CD4-positive, alpha-beta memory T cell (primary cell): ENCODE measurements at regions of chr10 and their contacts with region 1.

Region 1: DNA sequence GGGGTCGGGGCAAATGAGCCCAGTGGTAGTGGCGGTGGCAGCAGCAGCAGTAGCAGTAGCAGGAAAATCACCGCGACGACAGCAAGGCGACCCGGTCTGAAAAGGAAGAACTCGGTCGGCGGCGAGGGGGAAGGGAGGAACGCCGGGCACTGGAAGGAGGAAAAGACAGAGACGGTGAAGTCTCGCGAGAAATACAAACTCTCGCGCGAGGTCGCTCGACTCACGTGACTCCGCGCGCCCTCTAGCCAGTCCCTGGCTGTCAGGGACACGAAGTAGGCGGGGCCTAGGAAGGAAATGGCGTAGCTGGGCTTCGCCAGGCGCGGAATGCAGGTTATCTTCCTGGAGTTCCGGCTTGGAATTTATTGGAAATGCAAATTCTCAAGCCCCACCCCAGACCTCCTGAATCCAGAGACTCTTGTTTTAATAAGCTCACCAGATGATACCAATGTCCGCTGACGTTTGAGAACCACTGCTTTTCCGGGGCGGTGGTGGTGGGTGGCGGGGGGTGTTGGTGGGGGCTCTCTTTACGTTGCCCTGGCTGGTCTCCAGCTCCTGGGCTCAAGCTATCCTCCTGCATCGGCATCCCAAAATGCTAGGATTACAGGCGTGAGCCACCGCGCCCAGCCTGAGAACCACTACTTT is at the start of gene SMNDC1:
- DNase-seq: peak; percentile 96 to 97 (median 96)
- H3K4me3 ChIP-seq: peak within 1 kb of the TSS; percentile 62 to 70
- H3K4me3 Mint-ChIP-seq: peak within 1 kb of the TSS; percentile 96 to 98 (median 98)
- H3K27ac ChIP-seq: peak within 1 kb of the TSS; percentile 81
- H3K27ac Mint-ChIP-seq: peak within 1 kb of the TSS; percentile 95 to 100 (median 99)
- H3K4me1 ChIP-seq: peaks cover 52% of the 10 kb centered on the region
- H3K4me1 Mint-ChIP-seq: peaks cover 27 to 58% (median 45%) of the 10 kb centered on the region in 4 donors
- H3K27me3 ChIP-seq: no peaks in the 10 kb centered on the region
- H3K27me3 Mint-ChIP-seq: no peaks in the 10 kb centered on the region
- total RNA-seq, gene SMNDC1: 39.0 to 39.3 TPM

Region 2: GRCh38 chr10:110225756-110226542 is 79.0 kb before region 1 on chr10:
- CTCF ChIA-PET with region 1: no interaction called
- POLR2A ChIA-PET with region 1: interaction called, 3 read pairs
- intact Hi-C with region 1: loop called (anchors 1 kb)
- DNase-seq: peak; percentile 88 to 90 (median 89)
- H3K4me3 ChIP-seq: peak overlapping the region; percentile 39 to 82
- H3K4me3 Mint-ChIP-seq: peak overlapping the region; percentile 92 to 96 (median 94)
- H3K27ac ChIP-seq: peak overlapping the region; percentile 67
- H3K27ac Mint-ChIP-seq: peak overlapping the region; percentile 91 to 96 (median 96)
- H3K4me1 ChIP-seq: peaks cover 29% of the 10 kb centered on the region
- H3K4me1 Mint-ChIP-seq: peaks cover 27 to 62% (median 42%) of the 10 kb centered on the region in 4 donors
- H3K27me3 ChIP-seq: no peaks in the 10 kb centered on the region
- H3K27me3 Mint-ChIP-seq: no peaks in the 10 kb centered on the region

Region 3: DNA sequence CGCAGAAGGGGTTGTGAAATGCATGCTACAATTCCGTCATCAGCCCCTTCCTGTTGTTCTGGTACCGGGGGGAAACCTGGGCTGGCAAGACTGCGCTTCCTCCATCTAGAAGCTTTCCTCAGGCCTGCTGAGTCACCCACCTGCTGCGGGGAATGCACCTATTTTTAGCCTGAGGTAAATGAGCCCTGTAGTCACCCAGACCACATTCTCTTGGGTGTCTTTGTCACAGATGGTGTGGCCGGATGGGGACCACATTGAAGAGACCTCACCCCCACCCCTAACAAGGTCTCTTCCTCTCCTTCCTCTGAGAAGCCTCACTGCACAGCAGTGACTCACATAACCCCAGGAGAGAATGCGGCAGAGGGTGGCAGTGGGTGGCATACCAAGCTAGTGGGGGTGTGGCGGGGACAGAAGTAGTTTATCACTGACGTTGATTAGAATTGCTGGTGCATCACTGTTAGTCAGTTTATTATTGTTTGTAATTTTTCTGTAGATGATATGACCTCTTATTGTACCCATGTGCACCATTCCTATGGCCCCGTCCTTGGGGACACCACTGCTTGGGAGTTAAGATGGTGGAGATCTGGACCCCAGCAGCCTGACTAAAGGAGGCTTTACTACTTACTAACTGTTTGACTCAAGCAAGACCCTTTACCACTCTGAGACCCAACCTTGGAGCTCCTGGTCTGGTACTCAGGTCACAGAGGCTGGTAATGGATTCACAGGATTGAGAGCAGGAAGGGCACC is 109.8 kb after region 1 on chr10:
- CTCF ChIA-PET with region 1: interaction called, 3 read pairs
- POLR2A ChIA-PET with region 1: interaction called, 14 read pairs
- intact Hi-C with region 1: loop called (anchors 2 kb)
- DNase-seq: peak; percentile 88 to 99 (median 94)
- H3K4me3 ChIP-seq: peak overlapping the region in 1 of 2 donors; percentile 5
- H3K4me3 Mint-ChIP-seq: peak overlapping the region; percentile 22 to 71 (median 62)
- H3K27ac ChIP-seq: peak overlapping the region; percentile 62
- H3K27ac Mint-ChIP-seq: peak overlapping the region; percentile 89 to 98 (median 93)
- H3K4me1 ChIP-seq: peaks cover 43% of the 10 kb centered on the region
- H3K4me1 Mint-ChIP-seq: peaks cover 25 to 60% (median 33%) of the 10 kb centered on the region in 4 donors
- H3K27me3 ChIP-seq: no peaks in the 10 kb centered on the region
- H3K27me3 Mint-ChIP-seq: no peaks in the 10 kb centered on the region

Region 4: GRCh38 chr10:110547139-110547761 is 242.3 kb after region 1 on chr10:
- CTCF ChIA-PET with region 1: interaction called, 79 read pairs
- POLR2A ChIA-PET with region 1: interaction called, 16 read pairs
- intact Hi-C with region 1: loop called (anchors 1 kb)
- DNase-seq: peak in 4 of 5 donors; percentile 67 to 74 (median 70)
- H3K4me3 ChIP-seq: no peak overlapping the region
- H3K4me3 Mint-ChIP-seq: no peak overlapping the region
- H3K27ac ChIP-seq: no peak overlapping the region
- H3K27ac Mint-ChIP-seq: peak overlapping the region in 1 of 7 donors; percentile 59
- H3K4me1 ChIP-seq: peaks cover 8% of the 10 kb centered on the region
- H3K4me1 Mint-ChIP-seq: peaks cover 4 to 8% (median 5%) of the 10 kb centered on the region in 4 donors
- H3K27me3 ChIP-seq: peaks cover 3% of the 10 kb centered on the region
- H3K27me3 Mint-ChIP-seq: peaks cover 1 to 13% of the 10 kb centered on the region in 2 donors

Region 5: DNA sequence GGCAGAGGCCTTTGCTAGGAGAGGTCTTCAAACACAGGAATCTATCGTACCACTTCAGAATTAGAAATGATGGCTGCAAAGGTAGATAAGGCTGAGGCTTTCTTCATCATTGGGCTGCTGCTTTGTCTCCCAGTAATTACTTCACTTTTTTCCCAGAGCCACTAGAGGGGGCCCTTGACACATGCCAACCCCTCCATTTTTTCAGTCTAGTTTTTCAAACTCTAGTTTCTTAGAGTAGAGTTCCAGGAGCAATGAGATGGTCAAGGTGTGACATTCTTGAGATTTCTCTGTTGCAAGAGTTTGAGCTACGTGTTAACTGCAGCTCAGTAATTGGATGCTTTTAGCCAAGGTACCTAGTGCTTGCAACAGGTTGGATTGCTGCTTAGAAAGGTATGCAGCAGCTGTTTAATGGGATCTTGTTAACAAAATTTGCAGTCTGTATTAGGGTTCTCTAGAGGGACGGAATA is 305.4 kb after region 1 on chr10:
- CTCF ChIA-PET with region 1: interaction called, 10 read pairs
- POLR2A ChIA-PET with region 1: interaction called, 4 read pairs
- intact Hi-C with region 1: no loop called
- DNase-seq: peak; percentile 56 to 70 (median 63)
- H3K4me3 ChIP-seq: no peak overlapping the region
- H3K4me3 Mint-ChIP-seq: no peak overlapping the region
- H3K27ac ChIP-seq: no peak overlapping the region
- H3K27ac Mint-ChIP-seq: no peak overlapping the region
- H3K4me1 ChIP-seq: no peaks in the 10 kb centered on the region
- H3K4me1 Mint-ChIP-seq: peaks cover 0 to 17% (median 7%) of the 10 kb centered on the region in 4 donors
- H3K27me3 ChIP-seq: no peaks in the 10 kb centered on the region
- H3K27me3 Mint-ChIP-seq: no peaks in the 10 kb centered on the region

Region 6: GRCh38 chr10:110967645-110968044 is 662.7 kb after region 1 on chr10:
- CTCF ChIA-PET with region 1: no interaction called
- POLR2A ChIA-PET with region 1: no interaction called
- intact Hi-C with region 1: no loop called
- DNase-seq: no peak
- H3K4me3 ChIP-seq: no peak overlapping the region
- H3K4me3 Mint-ChIP-seq: no peak overlapping the region
- H3K27ac ChIP-seq: no peak overlapping the region
- H3K27ac Mint-ChIP-seq: peak overlapping the region in 1 of 7 donors; percentile 18
- H3K4me1 ChIP-seq: peaks cover 51% of the 10 kb centered on the region
- H3K4me1 Mint-ChIP-seq: peaks cover 45 to 69% (median 52%) of the 10 kb centered on the region in 4 donors
- H3K27me3 ChIP-seq: no peaks in the 10 kb centered on the region
- H3K27me3 Mint-ChIP-seq: no peaks in the 10 kb centered on the region